H1 (cell line): ENCODE measurements at regions of chr2 and their contacts with region 1.

Region 1: DNA sequence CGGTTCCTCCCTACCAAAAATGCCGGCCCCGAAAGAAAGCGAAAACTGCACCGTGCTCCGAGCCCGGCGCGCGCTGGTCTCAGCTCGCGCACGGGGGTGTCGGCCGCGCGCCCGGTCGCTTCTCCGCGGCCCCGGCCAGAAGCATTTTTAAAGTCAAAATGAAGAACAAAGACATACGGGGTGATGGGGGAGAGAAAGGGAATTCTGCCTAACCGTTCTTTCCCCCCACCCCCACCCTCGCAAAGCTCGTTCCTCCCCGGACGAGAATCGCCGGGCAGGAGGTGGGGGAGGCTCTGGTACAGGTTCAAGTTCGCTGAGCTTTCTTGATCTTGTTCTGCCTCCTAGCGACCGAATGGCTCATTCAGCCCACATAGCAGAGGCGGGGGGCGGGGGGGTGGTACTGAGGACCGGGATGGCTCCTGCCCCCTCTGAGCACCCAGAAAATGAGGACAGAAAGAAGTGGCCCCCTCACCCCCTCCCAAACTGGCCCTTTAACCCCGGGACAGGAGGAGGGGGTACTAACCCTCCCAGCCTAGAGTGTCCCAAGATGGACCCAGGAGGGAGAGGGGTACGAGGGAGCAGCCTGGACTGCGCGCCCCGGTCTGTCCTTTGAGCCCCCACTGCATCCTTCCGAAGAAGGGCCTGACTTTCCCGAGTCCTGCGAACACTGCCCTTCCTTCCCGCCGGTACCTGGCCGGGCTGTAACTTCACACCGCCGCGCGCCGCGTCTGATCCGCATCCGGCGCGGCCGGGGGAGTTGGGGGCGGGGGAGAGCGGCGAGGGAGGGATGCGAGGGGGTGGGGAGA is 3.1 kb downstream of the BCL11A start:
- DNase-seq: peak in 1 of 2 experiments; percentile 81
- H3K4me3 ChIP-seq: peak overlapping the region; percentile 74 to 96 (median 87)
- H3K27ac ChIP-seq: peak overlapping the region; percentile 74; the same call in 1 of the 2 replicates
- H3K4me1 ChIP-seq: peaks cover 0 to 11% (median 3%) of the 10 kb centered on the region in 4 experiments; a peak in 4 of 7 replicates
- H3K27me3 ChIP-seq: no peaks in the 10 kb centered on the region
- CTCF ChIP-seq: peak; percentile 69 to 77 (median 72)
- EP300 ChIP-seq: peak in 1 of 2 experiments; percentile 63; a peak in 1 of 3 replicates
- POLR2A ChIP-seq: peak; percentile 67 to 88
- RAD21 ChIP-seq: peak; percentile 86 to 90

Region 2: GRCh38 chr2:60484133-60484645 is 66.2 kb before region 1 on chr2:
- CTCF ChIA-PET with region 1: interaction called, 4 read pairs
- POLR2A ChIA-PET with region 1: interaction called, 13 read pairs
- DNase-seq: no peak
- H3K4me3 ChIP-seq: no peak overlapping the region
- H3K27ac ChIP-seq: no peak overlapping the region
- H3K4me1 ChIP-seq: peaks cover 10 to 23% (median 13%) of the 10 kb centered on the region in 4 experiments
- H3K27me3 ChIP-seq: no peaks in the 10 kb centered on the region; a peak in 2 of 7 replicates
- CTCF ChIP-seq: no peak
- EP300 ChIP-seq: no peak
- POLR2A ChIP-seq: no peak
- RAD21 ChIP-seq: no peak

Region 3: DNA sequence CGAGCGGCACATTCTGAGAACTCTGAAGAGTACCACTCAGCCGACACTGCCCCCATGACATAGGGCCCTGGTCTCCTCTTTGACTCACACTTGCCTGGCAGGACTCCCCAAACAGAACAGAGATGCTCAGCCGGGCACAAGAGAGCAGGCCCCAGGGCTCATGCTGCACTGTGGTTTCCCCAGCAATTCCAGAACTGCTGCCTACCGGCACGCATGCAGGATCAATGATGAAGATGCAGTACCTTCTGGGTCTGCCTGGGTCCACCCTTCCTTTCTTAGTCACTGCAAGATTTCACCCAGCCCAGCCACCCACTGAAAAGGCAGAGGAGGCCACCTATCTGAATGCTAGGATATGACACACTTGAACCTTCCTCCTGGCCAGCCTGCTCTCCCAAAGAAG is 46.3 kb before region 1 on chr2:
- CTCF ChIA-PET with region 1: interaction called, 10 read pairs
- POLR2A ChIA-PET with region 1: interaction called, 8 read pairs
- DNase-seq: no peak
- H3K4me3 ChIP-seq: no peak overlapping the region
- H3K27ac ChIP-seq: no peak overlapping the region
- H3K4me1 ChIP-seq: peaks cover 6 to 19% (median 14%) of the 10 kb centered on the region in 4 experiments
- H3K27me3 ChIP-seq: no peaks in the 10 kb centered on the region
- CTCF ChIP-seq: peak in 2 of 3 experiments; percentile 20 to 29; a peak in 2 of 4 replicates
- EP300 ChIP-seq: no peak
- POLR2A ChIP-seq: no peak
- RAD21 ChIP-seq: peak; percentile 33 to 57; a peak in 3 of 4 replicates

Region 4: GRCh38 chr2:60516383-60516811 is 34.0 kb before region 1 on chr2:
- CTCF ChIA-PET with region 1: interaction called, 7 read pairs
- POLR2A ChIA-PET with region 1: interaction called, 12 read pairs
- DNase-seq: peak in 1 of 2 experiments; percentile 34
- H3K4me3 ChIP-seq: no peak overlapping the region
- H3K27ac ChIP-seq: no peak overlapping the region
- H3K4me1 ChIP-seq: peaks cover 22 to 60% (median 50%) of the 10 kb centered on the region in 4 experiments
- H3K27me3 ChIP-seq: no peaks in the 10 kb centered on the region
- CTCF ChIP-seq: no peak
- EP300 ChIP-seq: no peak
- POLR2A ChIP-seq: no peak
- RAD21 ChIP-seq: no peak

Region 5: GRCh38 chr2:60535685-60536312 is 14.6 kb before region 1 on chr2:
- CTCF ChIA-PET with region 1: interaction called, 5 read pairs
- POLR2A ChIA-PET with region 1: interaction called, 31 read pairs
- DNase-seq: no peak
- H3K4me3 ChIP-seq: no peak overlapping the region
- H3K27ac ChIP-seq: no peak overlapping the region
- H3K4me1 ChIP-seq: peaks cover 24 to 50% (median 46%) of the 10 kb centered on the region in 4 experiments
- H3K27me3 ChIP-seq: peaks cover 0 to 1% (median 0%) of the 10 kb centered on the region in 4 experiments; a peak in 1 of 7 replicates
- CTCF ChIP-seq: no peak
- EP300 ChIP-seq: no peak
- POLR2A ChIP-seq: no peak
- RAD21 ChIP-seq: no peak

Region 6: DNA sequence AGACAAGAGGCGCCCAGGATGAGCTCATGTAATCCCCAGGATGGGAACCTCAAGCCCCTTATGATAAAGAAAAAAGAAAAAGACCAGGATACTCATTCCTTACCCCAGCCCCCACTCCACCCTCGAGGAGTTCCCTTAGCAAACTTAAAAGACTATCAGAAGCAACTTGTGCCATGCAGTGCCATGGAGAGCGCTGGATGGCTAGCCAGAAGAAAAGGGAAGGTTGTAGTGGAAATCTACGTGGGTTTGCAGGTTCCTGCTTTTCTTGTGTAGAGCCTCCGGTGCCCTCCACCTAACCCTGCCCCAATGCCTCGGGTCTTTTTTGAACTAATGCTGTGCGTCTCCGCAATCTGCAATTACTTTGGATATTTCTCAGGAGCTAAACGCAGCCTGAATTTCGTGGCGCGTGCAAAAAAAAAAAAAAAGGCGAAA is 19.3 kb after region 1 on chr2:
- CTCF ChIA-PET with region 1: interaction called, 240 read pairs
- POLR2A ChIA-PET with region 1: interaction called, 13 read pairs
- DNase-seq: peak in 1 of 2 experiments; percentile 53
- H3K4me3 ChIP-seq: peak overlapping the region; percentile 43 to 67 (median 57); a peak in 7 of 8 replicates
- H3K27ac ChIP-seq: no peak overlapping the region
- H3K4me1 ChIP-seq: peaks cover 4 to 14% (median 9%) of the 10 kb centered on the region in 4 experiments; a peak in 6 of 7 replicates
- H3K27me3 ChIP-seq: peaks cover 0 to 18% (median 14%) of the 10 kb centered on the region in 4 experiments; a peak in 6 of 7 replicates
- CTCF ChIP-seq: no peak
- EP300 ChIP-seq: no peak
- POLR2A ChIP-seq: no peak
- RAD21 ChIP-seq: no peak

Region 7: DNA sequence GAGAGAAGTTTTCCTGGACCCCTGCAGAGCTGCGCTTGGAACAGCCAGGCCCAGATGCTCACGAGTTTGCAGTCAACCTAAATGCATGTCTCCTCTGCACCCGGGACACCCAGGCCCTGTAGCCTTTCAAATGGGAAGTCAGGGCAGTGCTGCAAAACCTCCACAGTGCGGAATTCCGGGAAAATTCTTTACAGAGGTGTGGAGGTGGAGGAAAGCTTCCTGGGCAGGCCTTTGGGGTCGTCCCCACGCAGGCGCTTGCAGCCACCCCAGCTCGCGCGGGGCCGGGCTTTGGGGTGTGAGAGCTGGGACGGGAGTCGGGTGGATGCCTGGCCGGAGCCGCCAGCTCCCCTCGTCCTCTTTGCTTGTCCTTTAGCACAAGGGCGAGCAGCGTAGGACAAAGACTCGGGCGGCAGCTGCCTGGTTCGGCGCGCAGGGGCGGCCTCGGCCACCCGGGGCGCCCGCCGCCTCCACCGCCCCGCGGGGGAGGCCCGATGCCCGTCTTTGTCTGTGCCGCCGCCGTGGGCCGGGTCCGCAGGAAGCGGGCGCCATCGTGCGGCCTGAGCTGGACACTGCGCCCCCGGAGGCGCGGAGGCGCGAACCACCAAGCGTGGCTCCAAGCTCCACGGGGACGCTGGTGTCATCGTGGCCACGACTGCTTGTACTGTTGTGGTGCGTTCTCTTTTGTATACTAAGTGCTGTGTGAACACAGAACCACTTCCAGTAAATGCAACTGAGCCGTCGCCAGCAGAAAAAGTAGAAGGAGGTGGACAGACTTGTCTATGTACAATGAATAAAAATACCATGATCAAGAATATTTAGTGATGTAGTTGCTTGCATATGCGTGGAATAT is 31.3 kb after region 1 on chr2:
- CTCF ChIA-PET with region 1: interaction called, 240 read pairs
- POLR2A ChIA-PET with region 1: interaction called, 5 read pairs
- DNase-seq: peak in 1 of 2 experiments; percentile 92
- H3K4me3 ChIP-seq: peak overlapping the region; percentile 22 to 70 (median 52)
- H3K27ac ChIP-seq: no peak overlapping the region
- H3K4me1 ChIP-seq: peaks cover 0 to 3% (median 0%) of the 10 kb centered on the region in 4 experiments; a peak in 1 of 7 replicates
- H3K27me3 ChIP-seq: peaks cover 1 to 12% (median 10%) of the 10 kb centered on the region in 4 experiments; a peak in 6 of 7 replicates
- CTCF ChIP-seq: peak; percentile 86 to 98 (median 95)
- EP300 ChIP-seq: peak in 1 of 2 experiments; percentile 49; a peak in 1 of 3 replicates
- POLR2A ChIP-seq: no peak
- RAD21 ChIP-seq: peak; percentile 92 to 97

Region 8: GRCh38 chr2:60614319-60614718 is 63.9 kb after region 1 on chr2:
- CTCF ChIA-PET with region 1: no interaction called
- POLR2A ChIA-PET with region 1: no interaction called
- DNase-seq: no peak
- H3K4me3 ChIP-seq: no peak overlapping the region
- H3K27ac ChIP-seq: no peak overlapping the region
- H3K4me1 ChIP-seq: no peaks in the 10 kb centered on the region
- H3K27me3 ChIP-seq: no peaks in the 10 kb centered on the region
- CTCF ChIP-seq: no peak
- EP300 ChIP-seq: no peak
- POLR2A ChIP-seq: no peak
- RAD21 ChIP-seq: no peak